Mammary epithelial cell (primary cell): ENCODE measurements at regions of chr9 and their contacts with region 1.

Region 1: GRCh38 chr9:89179895-89180667 is 1.5 kb upstream of the SHC3 start:
- DNase-seq: peak; percentile 93
- H3K4me3 ChIP-seq: peak overlapping the region; percentile 10 to 30 (median 27)
- H3K27ac ChIP-seq: no peak overlapping the region
- H3K4me1 ChIP-seq: peaks cover 16% of the 10 kb centered on the region
- H3K27me3 ChIP-seq: peaks cover 20% of the 10 kb centered on the region
- CTCF ChIP-seq: no peak

Region 2: GRCh38 chr9:89154651-89155336 is 25.3 kb before region 1 on chr9:
- CTCF ChIA-PET with region 1: no interaction called
- dilution Hi-C with region 1: no loop called
- in situ Hi-C with region 1: no loop called
- intact Hi-C with region 1: loop called (anchors 1 kb)
- DNase-seq: peak; percentile 88
- H3K4me3 ChIP-seq: no peak overlapping the region
- H3K27ac ChIP-seq: peak overlapping the region; percentile 29
- H3K4me1 ChIP-seq: peaks cover 27% of the 10 kb centered on the region
- H3K27me3 ChIP-seq: no peaks in the 10 kb centered on the region
- CTCF ChIP-seq: no peak

Region 3: GRCh38 chr9:89260525-89260924 is 80.4 kb after region 1 on chr9:
- CTCF ChIA-PET with region 1: no interaction called
- dilution Hi-C with region 1: loop called (anchors 10 kb)
- in situ Hi-C with region 1: no loop called
- intact Hi-C with region 1: no loop called
- DNase-seq: no peak
- H3K4me3 ChIP-seq: no peak overlapping the region
- H3K27ac ChIP-seq: no peak overlapping the region
- H3K4me1 ChIP-seq: no peaks in the 10 kb centered on the region
- H3K27me3 ChIP-seq: no peaks in the 10 kb centered on the region
- CTCF ChIP-seq: no peak

Region 4: DNA sequence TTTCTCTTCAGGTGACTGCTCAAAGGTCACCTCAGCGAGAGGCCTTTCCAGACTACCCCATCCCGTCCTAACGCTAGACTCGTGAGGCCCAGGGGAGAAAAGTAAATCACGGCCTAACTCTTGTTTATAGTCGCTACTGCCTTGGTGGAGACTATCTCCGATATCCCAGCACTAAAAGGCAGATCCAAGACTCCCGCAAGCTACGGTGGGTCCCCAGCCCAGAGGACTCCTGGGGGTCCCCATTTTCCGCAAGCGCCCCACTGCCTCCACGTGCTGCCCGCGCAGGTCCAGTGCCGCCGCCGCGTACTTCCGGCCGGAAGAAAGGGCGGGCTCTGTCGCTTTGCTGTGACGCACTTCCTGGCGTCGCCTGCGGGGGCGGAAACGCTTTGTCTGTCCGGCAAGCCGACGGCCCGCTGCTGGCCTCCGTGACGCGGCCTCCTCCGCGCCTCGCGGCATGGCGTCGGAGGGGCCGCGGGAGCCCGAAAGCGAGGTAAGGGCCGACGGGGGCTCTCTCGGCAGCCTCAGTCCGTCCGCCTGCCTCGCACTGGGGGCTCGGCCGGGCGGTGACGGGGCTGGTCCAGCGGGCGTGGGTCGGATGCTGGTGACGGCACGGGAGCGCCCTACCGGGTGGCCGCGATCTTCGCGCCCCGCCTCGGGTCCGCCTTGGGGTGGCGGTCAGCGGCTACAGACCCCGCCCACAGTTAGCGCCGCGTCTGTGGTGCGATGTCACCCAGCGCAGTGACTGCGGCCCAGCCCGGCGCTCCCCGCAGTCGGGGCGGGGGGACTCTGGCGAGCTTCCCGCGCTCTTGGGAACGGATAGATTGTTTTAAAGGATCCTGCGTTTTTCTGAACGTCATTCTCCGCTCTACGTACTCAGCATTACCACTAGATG is 138.3 kb after region 1 on chr9 and contains the start of gene SECISBP2:
- CTCF ChIA-PET with region 1: no interaction called
- dilution Hi-C with region 1: no loop called
- in situ Hi-C with region 1: no loop called
- intact Hi-C with region 1: loop called (anchors 10 kb)
- DNase-seq: peak; percentile 95
- H3K4me3 ChIP-seq: peak within 1 kb of the TSS; percentile 74 to 87 (median 79)
- H3K27ac ChIP-seq: peak within 1 kb of the TSS; percentile 88
- H3K4me1 ChIP-seq: peaks cover 39% of the 10 kb centered on the region
- H3K27me3 ChIP-seq: no peaks in the 10 kb centered on the region
- CTCF ChIP-seq: peak; percentile 74 to 80
- total RNA-seq, gene SECISBP2: 24.5 to 26.5 TPM